ENCODE measurements at regions of chr2 and their contacts with region 1.

Region 1: GRCh38 chr2:24329700-24330099 is 30.6 kb downstream of the ITSN2 start:
- DNase-seq: peak; percentile 63
- ATAC-seq: peak; percentile 59
- H3K4me3 ChIP-seq: peak overlapping the region in 4 of 5 experiments; percentile 16 to 48 (median 32)
- H3K4me3 Mint-ChIP-seq: peak overlapping the region; percentile 81
- H3K27ac ChIP-seq: peak overlapping the region; percentile 85 to 92
- H3K27ac Mint-ChIP-seq: peak overlapping the region; percentile 97
- H3K4me1 ChIP-seq: peaks cover 59 to 61% of the 10 kb centered on the region in 2 donors
- H3K4me1 Mint-ChIP-seq: peaks cover 73% of the 10 kb centered on the region
- H3K27me3 ChIP-seq: no peaks in the 10 kb centered on the region
- H3K27me3 Mint-ChIP-seq: no peaks in the 10 kb centered on the region
- CTCF ChIP-seq: no peak

Region 2: GRCh38 chr2:24315669-24316068 is 14.0 kb before region 1 on chr2:
- CTCF ChIA-PET with region 1: interaction called, 3 read pairs
- POLR2A ChIA-PET with region 1: no interaction called
- intact Hi-C with region 1: loop called (anchors 2 kb)
- DNase-seq: peak; percentile 60
- ATAC-seq: peak; percentile 86
- H3K4me3 ChIP-seq: no peak overlapping the region
- H3K4me3 Mint-ChIP-seq: peak overlapping the region; percentile 54
- H3K27ac ChIP-seq: peak overlapping the region; percentile 45 to 64
- H3K27ac Mint-ChIP-seq: peak overlapping the region; percentile 80
- H3K4me1 ChIP-seq: peaks cover 19 to 28% of the 10 kb centered on the region in 2 donors
- H3K4me1 Mint-ChIP-seq: peaks cover 49% of the 10 kb centered on the region
- H3K27me3 ChIP-seq: no peaks in the 10 kb centered on the region
- H3K27me3 Mint-ChIP-seq: no peaks in the 10 kb centered on the region
- CTCF ChIP-seq: no peak

Region 3: GRCh38 chr2:24342110-24342910 is 12.6 kb after region 1 on chr2:
- CTCF ChIA-PET with region 1: interaction called, 6 read pairs
- POLR2A ChIA-PET with region 1: no interaction called
- intact Hi-C with region 1: loop called (anchors 1 kb)
- DNase-seq: peak; percentile 44
- ATAC-seq: peak; percentile 58
- H3K4me3 ChIP-seq: peak overlapping the region in 1 of 5 experiments; percentile 54
- H3K4me3 Mint-ChIP-seq: peak overlapping the region; percentile 59
- H3K27ac ChIP-seq: peak overlapping the region; percentile 53 to 70
- H3K27ac Mint-ChIP-seq: peak overlapping the region; percentile 83
- H3K4me1 ChIP-seq: peaks cover 73 to 81% of the 10 kb centered on the region in 2 donors
- H3K4me1 Mint-ChIP-seq: peaks cover 82% of the 10 kb centered on the region
- H3K27me3 ChIP-seq: no peaks in the 10 kb centered on the region
- H3K27me3 Mint-ChIP-seq: no peaks in the 10 kb centered on the region
- CTCF ChIP-seq: no peak

Region 4: DNA sequence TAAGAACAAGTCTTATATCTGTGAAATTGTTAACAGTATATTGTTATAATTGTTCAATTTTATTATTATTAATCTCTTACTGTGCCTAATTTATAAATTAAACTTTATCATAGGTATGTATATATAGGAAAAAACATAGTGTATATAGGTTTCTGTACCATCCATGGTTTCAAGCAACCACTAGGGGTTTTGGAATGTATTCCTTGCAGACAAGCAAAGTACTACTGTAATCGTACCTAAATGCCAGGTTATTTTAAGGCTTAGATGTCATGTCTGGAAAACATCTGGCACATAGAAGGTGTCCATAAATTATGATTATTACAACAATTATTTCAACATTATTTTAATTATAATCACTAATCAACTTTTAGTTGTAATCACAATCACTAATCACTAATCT is 22.3 kb after region 1 on chr2:
- CTCF ChIA-PET with region 1: interaction called, 5 read pairs
- POLR2A ChIA-PET with region 1: no interaction called
- intact Hi-C with region 1: loop called (anchors 2 kb)
- DNase-seq: no peak
- ATAC-seq: no peak
- H3K4me3 ChIP-seq: no peak overlapping the region
- H3K4me3 Mint-ChIP-seq: no peak overlapping the region
- H3K27ac ChIP-seq: peak overlapping the region in 1 of 2 donors; percentile 74
- H3K27ac Mint-ChIP-seq: no peak overlapping the region
- H3K4me1 ChIP-seq: peaks cover 82 to 84% of the 10 kb centered on the region in 2 donors
- H3K4me1 Mint-ChIP-seq: peaks cover 78% of the 10 kb centered on the region
- H3K27me3 ChIP-seq: no peaks in the 10 kb centered on the region
- H3K27me3 Mint-ChIP-seq: no peaks in the 10 kb centered on the region
- CTCF ChIP-seq: no peak

Region 5: GRCh38 chr2:24360050-24360962 is 30.6 kb after region 1 on chr2 and contains the start of gene ITSN2:
- CTCF ChIA-PET with region 1: interaction called, 6 read pairs
- POLR2A ChIA-PET with region 1: interaction called, 40 read pairs
- intact Hi-C with region 1: loop called (anchors 5 kb)
- DNase-seq: peak; percentile 96
- ATAC-seq: peak; percentile 84
- H3K4me3 ChIP-seq: peak within 1 kb of the TSS; percentile 75 to 91 (median 88)
- H3K4me3 Mint-ChIP-seq: peak within 1 kb of the TSS; percentile 93
- H3K27ac ChIP-seq: peak within 1 kb of the TSS; percentile 97 to 99
- H3K27ac Mint-ChIP-seq: peak within 1 kb of the TSS; percentile 99
- H3K4me1 ChIP-seq: peaks cover 40 to 46% of the 10 kb centered on the region in 2 donors
- H3K4me1 Mint-ChIP-seq: peaks cover 50% of the 10 kb centered on the region
- H3K27me3 ChIP-seq: no peaks in the 10 kb centered on the region
- H3K27me3 Mint-ChIP-seq: no peaks in the 10 kb centered on the region
- CTCF ChIP-seq: no peak
- total RNA-seq, gene ITSN2: 200 and 203 TPM in 2 replicates